A549 (cell line): ENCODE measurements at regions of chr2 and their contacts with region 1.

Region 1: DNA sequence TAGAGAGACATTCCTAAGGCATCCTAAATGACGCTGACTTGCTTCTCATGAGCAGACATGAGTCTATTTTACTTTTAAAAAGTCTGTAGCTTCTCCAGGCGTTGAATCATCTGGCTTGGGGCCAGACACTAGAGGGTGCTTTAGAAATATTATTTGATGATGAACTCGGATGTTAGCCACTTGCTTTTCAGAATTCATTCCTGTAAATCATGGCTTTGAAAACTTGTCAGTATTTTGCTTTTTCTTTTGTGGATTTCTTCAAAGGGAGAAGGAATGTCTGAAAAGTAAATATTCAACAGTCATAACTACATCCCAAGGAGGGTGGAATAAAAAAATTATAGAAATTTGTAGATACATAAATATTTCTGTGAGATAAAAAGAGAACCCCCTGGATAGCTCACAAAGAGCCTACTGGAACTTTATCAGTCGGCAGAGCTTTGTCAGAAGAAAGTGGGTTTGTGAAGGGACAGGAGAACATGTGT is 370.8 kb downstream of the OSR1 start:
- DNase-seq: peak; percentile 27 to 84
- ATAC-seq: peak; percentile 33 to 64; a peak in 3 of 6 replicates
- H3K4me3 ChIP-seq: no peak overlapping the region
- H3K27ac ChIP-seq: peak overlapping the region; percentile 56 to 79
- H3K4me1 ChIP-seq: peaks cover 47% of the 10 kb centered on the region
- CTCF ChIP-seq: peak; percentile 54
- EP300 ChIP-seq: peak; percentile 80; a peak in 3 of 5 replicates
- POLR2A ChIP-seq: no peak
- RAD21 ChIP-seq: peak; percentile 54 to 80

Region 2: DNA sequence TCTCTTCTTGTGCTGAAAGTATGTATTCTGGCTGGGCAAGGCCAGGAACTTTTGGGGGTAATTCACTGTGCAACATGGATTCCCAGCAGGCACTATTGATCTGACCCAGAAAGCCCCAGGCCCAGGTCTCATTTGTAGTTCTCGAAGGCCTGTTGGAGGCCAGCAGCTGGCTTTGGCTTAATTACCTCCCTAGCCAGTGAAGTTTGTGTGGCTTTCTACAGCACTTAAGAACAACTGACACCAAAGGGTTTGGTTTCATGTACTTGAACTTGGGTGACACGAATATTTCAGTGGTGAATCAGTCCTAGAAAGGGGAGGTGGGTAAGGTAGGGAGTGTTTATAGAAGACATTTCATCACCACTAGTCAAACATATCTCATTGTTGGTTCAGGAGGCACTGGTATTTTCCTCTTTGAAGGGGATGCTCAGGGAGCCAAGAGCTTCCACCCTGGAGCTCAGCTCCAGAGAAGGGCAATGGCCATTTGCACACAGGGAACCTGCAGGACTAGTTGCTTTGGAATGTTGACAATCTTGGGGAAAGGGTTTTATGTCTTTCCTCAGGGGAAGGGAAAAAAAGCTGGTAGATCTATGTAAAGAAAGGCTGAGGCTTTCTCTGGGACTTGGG is 153.1 kb after region 1 on chr2:
- CTCF ChIA-PET with region 1: no interaction called
- POLR2A ChIA-PET with region 1: interaction called, 12 read pairs
- DNase-seq: peak; percentile 92 to 98
- ATAC-seq: peak; percentile 98
- H3K4me3 ChIP-seq: no peak overlapping the region
- H3K27ac ChIP-seq: peak overlapping the region; percentile 77 to 91
- H3K4me1 ChIP-seq: peaks cover 59% of the 10 kb centered on the region
- CTCF ChIP-seq: no peak
- EP300 ChIP-seq: peak; percentile 96 to 97
- POLR2A ChIP-seq: no peak
- RAD21 ChIP-seq: peak; percentile 52 to 85

Region 3: GRCh38 chr2:19347619-19348562 is 360.3 kb after region 1 on chr2:
- CTCF ChIA-PET with region 1: no interaction called
- POLR2A ChIA-PET with region 1: interaction called, 17 read pairs
- DNase-seq: peak; percentile 98
- ATAC-seq: peak; percentile 89 to 94
- H3K4me3 ChIP-seq: peak overlapping the region; percentile 75
- H3K27ac ChIP-seq: peak overlapping the region; percentile 91 to 92
- H3K4me1 ChIP-seq: peaks cover 6% of the 10 kb centered on the region; the same call in 1 of the 3 replicates
- CTCF ChIP-seq: no peak
- EP300 ChIP-seq: no peak
- POLR2A ChIP-seq: peak; percentile 99
- RAD21 ChIP-seq: peak in 1 of 2 experiments; percentile 53; a peak in 3 of 5 replicates